ENCODE measurements at regions of chr11 and their contacts with region 1.

Region 1: GRCh38 chr11:108008656-108009496 is at the start of gene CUL5:
- DNase-seq: peak; percentile 95
- ATAC-seq: peak; percentile 91
- H3K4me3 ChIP-seq: peak within 1 kb of the TSS; percentile 79 to 100 (median 99)
- H3K4me3 Mint-ChIP-seq: peak within 1 kb of the TSS; percentile 99
- H3K27ac ChIP-seq: peak within 1 kb of the TSS; percentile 95 to 97
- H3K27ac Mint-ChIP-seq: peak within 1 kb of the TSS; percentile 98
- H3K4me1 ChIP-seq: peaks cover 18 to 20% of the 10 kb centered on the region in 2 donors
- H3K4me1 Mint-ChIP-seq: peaks cover 26% of the 10 kb centered on the region
- H3K27me3 ChIP-seq: no peaks in the 10 kb centered on the region
- H3K27me3 Mint-ChIP-seq: no peaks in the 10 kb centered on the region
- CTCF ChIP-seq: peak; percentile 80
- total RNA-seq, gene CUL5: 44.1 and 47.0 TPM in 2 replicates

Region 2: DNA sequence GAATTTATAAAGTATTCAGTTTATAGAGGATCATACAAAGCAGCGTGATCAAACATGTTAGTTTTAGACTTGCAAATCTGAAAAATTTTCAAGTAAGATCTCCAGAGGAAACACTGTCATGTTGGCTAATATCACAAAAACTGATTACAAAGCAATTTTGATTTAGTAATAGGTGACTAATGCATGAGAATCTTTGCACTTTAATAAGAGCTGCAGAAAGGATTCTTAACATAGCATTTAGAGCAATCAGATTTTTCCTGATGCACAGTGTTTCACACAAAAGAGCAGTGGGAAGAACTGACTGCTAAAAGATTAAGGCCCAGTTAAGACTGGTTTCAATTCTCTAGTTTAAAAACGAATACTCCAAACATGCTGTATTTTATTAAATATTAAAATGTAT is 1311.8 kb before region 1 on chr11:
- CTCF ChIA-PET with region 1: no interaction called
- POLR2A ChIA-PET with region 1: no interaction called
- intact Hi-C with region 1: no loop called
- DNase-seq: no peak
- ATAC-seq: no peak
- H3K4me3 ChIP-seq: no peak overlapping the region
- H3K4me3 Mint-ChIP-seq: no peak overlapping the region
- H3K27ac ChIP-seq: no peak overlapping the region
- H3K27ac Mint-ChIP-seq: no peak overlapping the region
- H3K4me1 ChIP-seq: no peaks in the 10 kb centered on the region
- H3K4me1 Mint-ChIP-seq: no peaks in the 10 kb centered on the region
- H3K27me3 ChIP-seq: no peaks in the 10 kb centered on the region
- H3K27me3 Mint-ChIP-seq: no peaks in the 10 kb centered on the region
- CTCF ChIP-seq: no peak

Region 3: DNA sequence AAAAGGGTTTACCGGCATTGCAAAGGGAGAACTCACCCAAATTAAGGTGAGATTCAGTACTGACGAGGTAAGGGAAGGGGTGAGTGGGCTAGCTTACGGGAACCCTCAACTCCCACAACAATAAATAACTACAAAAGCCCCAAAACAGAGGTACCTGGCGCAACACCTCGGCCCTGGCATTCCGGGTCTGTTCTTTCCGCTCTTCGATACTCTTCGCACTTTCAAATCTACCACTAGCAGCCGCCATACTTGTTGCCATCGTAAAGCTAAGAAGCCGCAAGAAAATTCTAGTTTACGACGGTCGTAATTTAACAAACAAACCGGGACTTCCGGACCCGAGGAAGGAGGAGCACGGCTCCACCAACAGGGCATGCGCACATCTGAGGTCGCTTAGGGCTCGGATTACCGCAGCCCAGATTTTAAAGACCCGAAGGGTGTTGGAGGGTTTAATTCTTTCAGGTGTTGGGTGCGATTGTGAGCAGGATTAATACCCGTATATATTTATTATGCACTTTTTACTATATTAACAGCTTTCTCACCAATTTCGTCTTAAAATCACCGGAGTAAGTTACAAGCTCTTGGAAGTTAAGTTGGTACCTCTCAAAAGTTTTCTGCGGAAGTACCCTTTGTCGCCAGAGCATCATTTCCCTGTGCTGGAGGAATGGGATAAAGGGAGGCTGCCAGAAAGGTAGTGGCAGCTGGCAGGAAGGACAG is 551.2 kb before region 1 on chr11 and contains the start of gene CWF19L2:
- CTCF ChIA-PET with region 1: interaction called, 3 read pairs
- POLR2A ChIA-PET with region 1: no interaction called
- intact Hi-C with region 1: loop called (anchors 2 kb)
- DNase-seq: peak; percentile 94
- ATAC-seq: peak; percentile 96
- H3K4me3 ChIP-seq: peak within 1 kb of the TSS; percentile 65 to 99 (median 94)
- H3K4me3 Mint-ChIP-seq: peak within 1 kb of the TSS; percentile 94
- H3K27ac ChIP-seq: peak within 1 kb of the TSS; percentile 64 to 88
- H3K27ac Mint-ChIP-seq: peak within 1 kb of the TSS; percentile 93
- H3K4me1 ChIP-seq: peaks cover 12 to 14% of the 10 kb centered on the region in 2 donors
- H3K4me1 Mint-ChIP-seq: peaks cover 27% of the 10 kb centered on the region
- H3K27me3 ChIP-seq: no peaks in the 10 kb centered on the region
- H3K27me3 Mint-ChIP-seq: peaks cover 5% of the 10 kb centered on the region
- CTCF ChIP-seq: no peak
- total RNA-seq, gene CWF19L2: 44.3 and 44.6 TPM in 2 replicates

Region 4: DNA sequence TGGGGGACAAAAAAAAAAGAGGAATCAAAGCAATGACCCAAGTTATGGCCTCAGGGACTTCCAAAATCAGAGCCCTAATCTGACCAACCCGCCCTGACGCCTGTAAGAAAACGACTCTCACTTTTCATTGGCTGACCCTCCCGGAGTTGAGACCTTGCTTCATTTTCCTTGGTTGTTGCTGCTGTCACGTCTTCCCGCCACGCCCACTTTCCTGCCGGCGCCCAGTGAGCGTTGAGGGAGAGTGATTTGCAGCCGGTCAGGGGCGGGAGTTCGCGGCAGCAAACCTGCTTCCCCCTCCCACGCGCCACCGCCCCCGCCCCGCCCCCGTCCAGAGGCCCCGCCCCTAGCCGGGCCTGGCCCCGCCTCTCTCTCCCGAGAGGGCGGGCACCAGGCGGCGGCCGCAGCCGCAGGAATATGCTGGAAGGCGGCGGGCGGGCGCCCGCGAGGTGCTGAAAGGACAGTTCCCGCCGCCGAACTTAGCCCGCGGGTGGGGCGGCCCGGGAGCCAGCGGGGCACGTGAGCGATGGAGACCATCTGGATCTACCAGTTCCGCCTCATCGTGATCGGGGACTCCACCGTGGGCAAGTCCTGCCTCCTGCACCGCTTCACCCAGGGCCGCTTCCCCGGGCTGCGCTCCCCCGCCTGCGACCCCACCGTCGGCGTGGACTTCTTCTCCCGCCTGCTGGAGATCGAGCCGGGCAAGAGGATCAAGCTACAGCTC is 80.7 kb before region 1 on chr11 and contains the start of gene RAB39A:
- CTCF ChIA-PET with region 1: interaction called, 5 read pairs
- POLR2A ChIA-PET with region 1: no interaction called
- intact Hi-C with region 1: loop called (anchors 1 kb)
- DNase-seq: peak; percentile 94
- ATAC-seq: peak; percentile 85
- H3K4me3 ChIP-seq: peak within 1 kb of the TSS; percentile 44 to 89 (median 74)
- H3K4me3 Mint-ChIP-seq: peak within 1 kb of the TSS; percentile 88
- H3K27ac ChIP-seq: peak within 1 kb of the TSS; percentile 37 to 52
- H3K27ac Mint-ChIP-seq: peak within 1 kb of the TSS; percentile 88
- H3K4me1 ChIP-seq: peaks cover 16 to 19% of the 10 kb centered on the region in 2 donors
- H3K4me1 Mint-ChIP-seq: peaks cover 30% of the 10 kb centered on the region
- H3K27me3 ChIP-seq: peaks cover 0 to 3% (median 0%) of the 10 kb centered on the region in 4 experiments
- H3K27me3 Mint-ChIP-seq: peaks cover 5% of the 10 kb centered on the region
- CTCF ChIP-seq: no peak
- total RNA-seq, gene RAB39A: 2.4 TPM in 2 replicates

Region 5: DNA sequence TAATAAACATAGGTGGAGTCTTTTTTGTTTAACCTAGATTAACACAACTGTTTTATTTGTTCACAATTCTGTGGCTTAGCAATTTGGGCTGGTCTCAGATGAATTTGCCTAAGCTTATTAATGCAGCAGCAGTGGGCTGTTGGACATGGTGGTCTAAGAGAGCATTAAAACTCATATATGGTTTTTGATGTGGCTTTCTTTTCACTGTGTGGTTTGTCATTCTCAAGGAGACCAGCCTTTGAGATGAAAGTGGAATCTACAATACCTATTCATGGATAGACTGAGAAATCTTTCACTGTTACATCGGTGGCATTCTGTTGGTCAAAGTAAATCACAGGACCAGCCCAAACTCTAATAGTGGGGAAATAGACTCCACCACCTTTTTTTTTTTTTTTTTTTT is 39.4 kb after region 1 on chr11:
- CTCF ChIA-PET with region 1: no interaction called
- POLR2A ChIA-PET with region 1: no interaction called
- intact Hi-C with region 1: no loop called
- DNase-seq: no peak
- ATAC-seq: no peak
- H3K4me3 ChIP-seq: no peak overlapping the region
- H3K4me3 Mint-ChIP-seq: no peak overlapping the region
- H3K27ac ChIP-seq: no peak overlapping the region
- H3K27ac Mint-ChIP-seq: peak overlapping the region; percentile 32
- H3K4me1 ChIP-seq: no peaks in the 10 kb centered on the region
- H3K4me1 Mint-ChIP-seq: no peaks in the 10 kb centered on the region
- H3K27me3 ChIP-seq: no peaks in the 10 kb centered on the region
- H3K27me3 Mint-ChIP-seq: no peaks in the 10 kb centered on the region
- CTCF ChIP-seq: no peak

Region 6: DNA sequence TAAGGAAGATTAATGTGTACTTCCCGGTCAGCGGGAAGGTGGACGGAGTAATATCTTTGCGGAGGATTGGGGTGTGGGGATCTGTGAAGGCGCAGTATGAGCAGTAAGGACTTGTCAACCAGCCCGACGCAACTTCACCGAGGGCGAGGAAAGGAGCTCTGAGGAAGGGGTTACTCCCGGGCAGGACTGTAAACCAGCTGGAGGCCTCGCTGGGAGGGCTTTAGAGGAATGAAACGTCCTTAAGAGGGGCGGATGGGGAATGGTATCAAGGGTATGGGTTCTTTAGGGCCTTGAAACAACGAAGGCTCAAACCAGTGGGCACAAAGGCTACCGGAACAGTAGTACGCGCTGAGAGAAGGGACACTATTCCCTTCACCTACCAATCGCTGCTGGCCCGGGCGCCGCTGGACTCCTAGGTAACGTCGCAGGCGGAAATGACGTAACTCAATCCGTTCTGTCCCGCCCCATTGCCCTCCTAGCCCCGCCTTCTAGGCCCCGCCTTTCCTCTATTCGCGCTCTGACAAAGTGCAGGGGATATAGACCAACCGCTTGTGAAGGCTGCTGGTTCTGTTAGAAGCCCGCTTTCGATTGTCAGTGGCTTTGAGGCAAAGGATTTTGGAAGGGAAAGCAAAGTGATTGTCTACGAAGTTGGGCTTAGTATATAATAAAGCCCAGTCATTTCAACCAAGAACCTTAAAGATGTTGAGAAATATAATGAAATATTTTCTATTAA is 458.4 kb after region 1 on chr11 and contains the start of gene C11orf65:
- CTCF ChIA-PET with region 1: no interaction called
- POLR2A ChIA-PET with region 1: no interaction called
- intact Hi-C with region 1: loop called (anchors 2 kb)
- DNase-seq: peak; percentile 98
- ATAC-seq: peak; percentile 96
- H3K4me3 ChIP-seq: peak within 1 kb of the TSS; percentile 79 to 96 (median 87)
- H3K4me3 Mint-ChIP-seq: peak within 1 kb of the TSS; percentile 98
- H3K27ac ChIP-seq: peak within 1 kb of the TSS; percentile 97 to 98
- H3K27ac Mint-ChIP-seq: peak within 1 kb of the TSS; percentile 99
- H3K4me1 ChIP-seq: peaks cover 0 to 11% of the 10 kb centered on the region in 2 donors
- H3K4me1 Mint-ChIP-seq: peaks cover 16% of the 10 kb centered on the region
- H3K27me3 ChIP-seq: no peaks in the 10 kb centered on the region
- H3K27me3 Mint-ChIP-seq: no peaks in the 10 kb centered on the region
- CTCF ChIP-seq: no peak
- total RNA-seq, gene C11orf65: 1.4 and 1.7 TPM in 2 replicates

Measured in B cell (primary cell).